Thyroid gland (tissue), 4 donors: ENCODE measurements at regions of chr4 and their contacts with region 1.

Region 1: DNA sequence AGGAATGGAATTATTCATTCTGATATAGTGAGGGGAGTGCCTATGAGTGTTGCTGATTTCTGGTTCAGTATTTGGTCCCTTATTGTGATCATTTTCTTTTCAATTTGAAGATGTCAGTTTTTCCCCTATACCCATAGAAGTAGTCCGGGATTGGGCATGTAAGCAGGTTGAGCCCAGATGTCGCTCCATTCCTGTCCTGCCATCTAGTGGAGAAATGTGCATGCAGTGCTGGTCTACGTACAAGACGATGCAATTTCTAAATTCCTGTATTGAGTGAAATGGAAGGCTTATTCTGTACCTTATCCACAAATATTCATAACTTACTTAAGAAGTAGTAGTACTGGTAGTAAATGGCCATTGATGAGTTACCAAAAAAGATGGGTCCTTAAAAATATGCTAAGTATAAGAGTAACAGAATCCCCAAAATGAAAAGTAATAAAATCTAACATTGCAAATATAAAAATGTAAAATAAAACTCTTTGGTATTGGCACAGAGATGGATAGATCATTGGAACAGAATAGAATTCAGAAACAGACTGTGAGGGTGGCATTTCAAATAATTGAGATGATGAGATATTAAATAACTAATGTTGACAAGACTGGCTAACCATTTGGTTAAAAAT is 60.9 kb downstream of the UGT8 start:
- DNase-seq: peak; percentile 66 to 68
- H3K4me3 ChIP-seq: no peak overlapping the region
- H3K27ac ChIP-seq: no peak overlapping the region
- H3K4me1 ChIP-seq: no peaks in the 10 kb centered on the region
- H3K27me3 ChIP-seq: no peaks in the 10 kb centered on the region
- CTCF ChIP-seq: peak; percentile 51 to 86 (median 65)
- POLR2A ChIP-seq: no peak

Region 2: DNA sequence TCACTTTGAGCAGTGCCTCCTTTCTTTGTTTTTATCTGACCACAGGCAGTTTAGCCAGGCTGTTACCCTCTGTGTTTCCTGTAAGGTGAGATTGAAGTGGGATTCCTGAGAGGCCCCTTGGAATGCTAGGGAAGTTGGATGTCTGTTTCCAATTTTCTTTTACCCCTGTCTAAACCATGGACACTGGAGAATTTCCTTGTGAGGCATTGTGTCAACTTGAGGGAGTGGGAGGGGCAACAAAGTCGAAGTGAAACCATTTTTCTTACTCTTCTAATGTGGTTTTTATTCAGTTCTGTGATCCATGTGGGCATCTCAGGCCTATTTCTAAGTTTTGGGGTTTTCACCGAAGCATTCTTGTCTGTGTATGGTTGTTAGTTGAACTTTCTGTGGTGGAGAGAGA is 357.0 kb before region 1 on chr4:
- intact Hi-C with region 1: no loop called
- DNase-seq: no peak
- H3K4me3 ChIP-seq: no peak overlapping the region
- H3K27ac ChIP-seq: no peak overlapping the region
- H3K4me1 ChIP-seq: no peaks in the 10 kb centered on the region
- H3K27me3 ChIP-seq: no peaks in the 10 kb centered on the region
- CTCF ChIP-seq: no peak
- POLR2A ChIP-seq: no peak

Region 3: GRCh38 chr4:114423582-114423981 is 235.9 kb before region 1 on chr4:
- intact Hi-C with region 1: no loop called
- DNase-seq: no peak
- H3K4me3 ChIP-seq: no peak overlapping the region
- H3K27ac ChIP-seq: no peak overlapping the region
- H3K4me1 ChIP-seq: no peaks in the 10 kb centered on the region
- H3K27me3 ChIP-seq: no peaks in the 10 kb centered on the region
- CTCF ChIP-seq: no peak
- POLR2A ChIP-seq: no peak

Region 4: GRCh38 chr4:114509340-114509739 is 150.2 kb before region 1 on chr4:
- intact Hi-C with region 1: loop called (anchors 10 kb)
- DNase-seq: no peak
- H3K4me3 ChIP-seq: no peak overlapping the region
- H3K27ac ChIP-seq: no peak overlapping the region
- H3K4me1 ChIP-seq: no peaks in the 10 kb centered on the region
- H3K27me3 ChIP-seq: no peaks in the 10 kb centered on the region
- CTCF ChIP-seq: peak in 3 of 6 experiments; percentile 18 to 37 (median 20)
- POLR2A ChIP-seq: no peak

Region 5: GRCh38 chr4:114839986-114840385 is 180.5 kb after region 1 on chr4:
- intact Hi-C with region 1: no loop called
- DNase-seq: no peak
- H3K4me3 ChIP-seq: no peak overlapping the region
- H3K27ac ChIP-seq: no peak overlapping the region
- H3K4me1 ChIP-seq: no peaks in the 10 kb centered on the region
- H3K27me3 ChIP-seq: no peaks in the 10 kb centered on the region
- CTCF ChIP-seq: no peak
- POLR2A ChIP-seq: no peak